ENCODE measurements at regions of chr3 and their contacts with region 1.

Region 1: DNA sequence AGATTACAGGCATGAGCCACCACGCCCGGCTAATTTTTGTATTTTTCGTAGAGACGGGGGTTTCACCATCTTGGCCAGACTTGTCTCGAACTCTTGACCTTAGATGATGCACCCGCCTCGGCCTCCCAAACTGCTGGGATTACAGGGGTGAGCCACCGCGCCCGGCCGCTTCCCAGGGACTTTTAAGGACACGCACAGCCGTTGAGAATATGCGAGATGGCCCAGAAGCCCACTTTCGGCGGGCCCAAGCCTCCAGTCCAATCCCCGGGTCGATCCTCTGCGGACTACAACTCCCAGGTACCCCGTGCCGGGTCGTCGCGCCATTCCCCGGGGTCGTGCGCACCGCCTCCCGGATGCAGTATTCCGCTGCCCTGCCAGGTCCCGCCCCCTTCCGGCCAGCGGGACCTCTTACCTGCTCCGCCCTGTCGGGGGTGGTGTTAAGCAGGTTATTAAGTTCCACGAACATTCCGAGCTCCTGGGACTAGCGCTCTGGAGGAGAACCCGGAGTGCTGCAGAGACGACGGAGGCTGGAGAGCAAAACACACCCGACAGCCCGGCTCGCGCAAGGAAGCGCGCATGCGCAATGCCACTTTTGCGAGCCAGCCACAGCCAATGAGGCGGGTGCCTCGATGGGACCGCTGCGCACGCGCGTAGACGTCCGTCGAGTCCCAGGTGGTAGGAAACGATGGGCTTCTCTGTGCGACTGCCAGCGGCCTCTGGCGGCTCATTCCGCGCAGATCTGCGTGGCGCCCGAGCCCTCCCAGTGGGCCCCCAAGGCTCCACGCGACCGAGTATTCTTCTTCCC is at the start of gene ELP6:
- DNase-seq: peak; percentile 92 to 99 (median 97)
- ATAC-seq: peak; percentile 93
- H3K4me3 ChIP-seq: peak within 1 kb of the TSS; percentile 96
- H3K4me3 Mint-ChIP-seq: peak within 1 kb of the TSS; percentile 99
- H3K27ac ChIP-seq: peak within 1 kb of the TSS; percentile 93 to 98
- H3K27ac Mint-ChIP-seq: peak within 1 kb of the TSS; percentile 89
- H3K4me1 ChIP-seq: peaks cover 22% of the 10 kb centered on the region
- H3K4me1 Mint-ChIP-seq: peaks cover 28% of the 10 kb centered on the region
- H3K27me3 ChIP-seq: no peaks in the 10 kb centered on the region
- H3K27me3 Mint-ChIP-seq: no peaks in the 10 kb centered on the region
- CTCF ChIP-seq: peak; percentile 68
- total RNA-seq, gene ELP6: 11.0 to 12.3 TPM

Region 2: GRCh38 chr3:47047673-47048072 is 465.7 kb before region 1 on chr3:
- CTCF ChIA-PET with region 1: no interaction called
- POLR2A ChIA-PET with region 1: no interaction called
- intact Hi-C with region 1: no loop called
- DNase-seq: no peak
- ATAC-seq: no peak
- H3K4me3 ChIP-seq: no peak overlapping the region
- H3K4me3 Mint-ChIP-seq: no peak overlapping the region
- H3K27ac ChIP-seq: no peak overlapping the region
- H3K27ac Mint-ChIP-seq: peak overlapping the region; percentile 36
- H3K4me1 ChIP-seq: no peaks in the 10 kb centered on the region
- H3K4me1 Mint-ChIP-seq: peaks cover 7% of the 10 kb centered on the region
- H3K27me3 ChIP-seq: no peaks in the 10 kb centered on the region
- H3K27me3 Mint-ChIP-seq: no peaks in the 10 kb centered on the region
- CTCF ChIP-seq: no peak

Region 3: DNA sequence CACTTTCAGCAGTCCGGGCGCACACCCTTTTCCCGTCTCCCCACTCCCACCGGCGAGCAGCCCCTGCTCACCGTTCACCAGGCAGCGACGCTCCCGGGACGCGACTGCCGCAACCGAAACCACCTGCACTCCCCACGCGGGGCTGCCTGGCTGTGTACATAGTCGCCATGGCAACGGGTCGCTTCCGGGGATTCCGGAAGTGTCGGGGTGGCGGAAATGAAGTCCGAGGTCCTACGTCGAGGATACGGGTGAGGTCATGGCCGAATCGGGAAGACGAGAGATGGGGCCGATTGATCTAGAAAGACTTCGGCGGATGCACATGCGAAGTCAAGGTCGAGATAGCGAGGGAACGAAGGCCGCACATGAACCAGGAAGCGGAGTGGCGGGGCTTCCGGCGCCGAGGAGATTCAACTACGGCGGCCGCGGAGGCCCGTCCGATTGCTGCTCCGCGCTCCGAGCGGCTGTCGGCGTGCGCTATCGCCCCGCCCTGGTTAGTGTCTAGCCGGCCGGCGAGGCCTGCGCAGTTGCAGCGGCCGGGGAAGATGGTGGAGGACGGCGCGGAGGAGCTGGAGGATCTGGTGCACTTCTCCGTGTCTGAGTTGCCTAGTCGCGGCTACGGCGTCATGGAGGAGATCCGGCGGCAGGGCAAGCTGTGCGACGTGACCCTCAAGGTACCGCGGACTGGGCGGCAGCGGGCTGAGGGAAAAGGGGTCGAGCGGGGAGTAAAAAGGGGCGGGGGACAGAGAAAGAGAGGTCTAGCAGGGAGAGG is 230.7 kb before region 1 on chr3 and contains the starts of genes KIF9 and KLHL18:
- CTCF ChIA-PET with region 1: no interaction called
- POLR2A ChIA-PET with region 1: no interaction called
- intact Hi-C with region 1: loop called in 1 of 2 experiments (anchors 2 kb)
- DNase-seq: peak; percentile 92 to 99 (median 95)
- ATAC-seq: peak; percentile 83
- H3K4me3 ChIP-seq: peak within 1 kb of the TSS; percentile 78
- H3K4me3 Mint-ChIP-seq: peak within 1 kb of the TSS; percentile 98
- H3K27ac ChIP-seq: peak within 1 kb of the TSS; percentile 95 to 98
- H3K27ac Mint-ChIP-seq: peak within 1 kb of the TSS; percentile 99
- H3K4me1 ChIP-seq: peaks cover 45% of the 10 kb centered on the region
- H3K4me1 Mint-ChIP-seq: peaks cover 42% of the 10 kb centered on the region
- H3K27me3 ChIP-seq: no peaks in the 10 kb centered on the region
- H3K27me3 Mint-ChIP-seq: no peaks in the 10 kb centered on the region
- CTCF ChIP-seq: no peak
- total RNA-seq, gene KIF9: 8.0 to 9.2 TPM
- total RNA-seq, gene KLHL18: 43.3 to 43.7 TPM

Region 4: GRCh38 chr3:47420511-47421484 is 92.5 kb before region 1 on chr3:
- CTCF ChIA-PET with region 1: interaction called, 4 read pairs
- POLR2A ChIA-PET with region 1: interaction called, 4 read pairs
- intact Hi-C with region 1: loop called (anchors 1 kb)
- DNase-seq: peak; percentile 78 to 94 (median 86)
- ATAC-seq: peak; percentile 99
- H3K4me3 ChIP-seq: no peak overlapping the region
- H3K4me3 Mint-ChIP-seq: peak overlapping the region; percentile 57
- H3K27ac ChIP-seq: peak overlapping the region; percentile 62 to 82
- H3K27ac Mint-ChIP-seq: peak overlapping the region; percentile 94
- H3K4me1 ChIP-seq: peaks cover 17% of the 10 kb centered on the region
- H3K4me1 Mint-ChIP-seq: peaks cover 12% of the 10 kb centered on the region
- H3K27me3 ChIP-seq: no peaks in the 10 kb centered on the region
- H3K27me3 Mint-ChIP-seq: no peaks in the 10 kb centered on the region
- CTCF ChIP-seq: peak; percentile 84

Region 5: DNA sequence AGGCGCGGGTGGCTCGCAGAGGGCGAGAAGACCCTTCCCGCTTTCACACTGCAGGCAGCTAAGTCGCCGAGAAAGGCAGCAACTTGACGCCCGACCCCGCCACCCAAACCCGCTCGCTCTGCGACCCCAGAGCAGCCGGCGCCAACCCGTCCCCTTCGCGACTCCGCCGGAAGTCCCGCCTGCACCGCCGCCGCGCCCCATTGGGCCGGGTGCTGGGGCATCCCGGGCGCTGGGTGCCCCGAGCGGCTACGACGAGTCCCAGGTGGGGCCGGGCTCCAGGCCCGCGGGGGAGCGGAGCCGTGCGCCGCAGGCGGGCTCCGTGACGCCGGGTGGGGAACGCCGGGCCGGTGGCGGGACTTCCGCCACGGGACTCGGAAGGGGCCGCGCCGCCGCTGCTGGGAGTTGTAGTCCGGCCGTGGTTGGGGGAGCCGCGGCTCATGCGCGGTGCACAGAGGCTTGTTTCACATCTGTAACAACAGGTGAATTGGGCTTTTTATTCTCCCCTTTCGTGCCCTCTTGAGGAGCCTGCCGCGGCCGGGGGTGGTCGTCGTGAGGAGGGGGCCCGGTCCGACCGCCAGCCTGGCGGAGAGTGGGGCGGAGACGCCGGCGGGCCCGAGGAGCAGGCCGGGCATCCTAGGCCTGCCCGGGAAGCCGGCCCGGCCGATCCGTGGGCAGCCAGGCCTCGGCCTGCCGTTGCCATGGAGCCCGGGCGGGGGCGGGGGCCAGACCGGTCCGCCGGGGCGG is 289.6 kb after region 1 on chr3 and contains the start of gene DHX30:
- CTCF ChIA-PET with region 1: no interaction called
- POLR2A ChIA-PET with region 1: no interaction called
- intact Hi-C with region 1: loop called in 1 of 2 experiments (anchors 1 kb)
- DNase-seq: peak; percentile 63 to 94 (median 80)
- ATAC-seq: peak; percentile 90
- H3K4me3 ChIP-seq: peak within 1 kb of the TSS; percentile 98
- H3K4me3 Mint-ChIP-seq: peak within 1 kb of the TSS; percentile 97
- H3K27ac ChIP-seq: peak within 1 kb of the TSS; percentile 83 to 85
- H3K27ac Mint-ChIP-seq: peak within 1 kb of the TSS; percentile 96
- H3K4me1 ChIP-seq: peaks cover 26% of the 10 kb centered on the region
- H3K4me1 Mint-ChIP-seq: peaks cover 20% of the 10 kb centered on the region
- H3K27me3 ChIP-seq: no peaks in the 10 kb centered on the region
- H3K27me3 Mint-ChIP-seq: no peaks in the 10 kb centered on the region
- CTCF ChIP-seq: no peak
- total RNA-seq, gene DHX30: 75.1 to 75.6 TPM

Region 6: GRCh38 chr3:48685602-48686511 is 1172.5 kb after region 1 on chr3 and contains the start of gene NCKIPSD:
- CTCF ChIA-PET with region 1: no interaction called
- POLR2A ChIA-PET with region 1: no interaction called
- intact Hi-C with region 1: loop called in 1 of 2 experiments (anchors 10 kb)
- DNase-seq: peak; percentile 83 to 96 (median 90)
- ATAC-seq: peak; percentile 90
- H3K4me3 ChIP-seq: peak within 1 kb of the TSS; percentile 69
- H3K4me3 Mint-ChIP-seq: peak within 1 kb of the TSS; percentile 97
- H3K27ac ChIP-seq: peak within 1 kb of the TSS; percentile 32 to 44
- H3K27ac Mint-ChIP-seq: peak within 1 kb of the TSS; percentile 79
- H3K4me1 ChIP-seq: peaks cover 31% of the 10 kb centered on the region
- H3K4me1 Mint-ChIP-seq: peaks cover 33% of the 10 kb centered on the region
- H3K27me3 ChIP-seq: no peaks in the 10 kb centered on the region
- H3K27me3 Mint-ChIP-seq: no peaks in the 10 kb centered on the region
- CTCF ChIP-seq: peak; percentile 83
- total RNA-seq, gene NCKIPSD: 9.7 to 10.8 TPM

Measured in CD4-positive, alpha-beta T cell (primary cell).